H1 (cell line): ENCODE measurements at regions of chr3 and their contacts with region 1.

Region 1: DNA sequence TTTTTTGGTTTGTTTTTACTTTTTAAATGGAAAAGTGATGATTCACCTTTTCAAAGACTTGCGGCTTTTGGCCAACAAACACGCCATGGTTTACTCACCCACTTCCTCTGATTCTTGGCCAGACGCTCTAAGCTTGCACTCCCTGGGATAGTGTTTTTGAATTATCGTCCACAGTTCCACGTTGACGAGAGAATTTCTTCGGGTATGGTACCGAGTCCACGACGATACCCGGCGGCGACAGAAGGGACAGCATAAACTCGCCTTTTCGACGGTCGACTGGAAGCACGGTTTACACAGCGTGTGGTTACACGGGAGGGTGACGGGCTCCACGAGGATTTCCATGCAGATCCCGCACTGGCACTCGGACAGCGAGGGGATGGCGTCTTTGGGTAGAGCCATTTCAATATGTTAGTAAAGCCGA is 783 bp downstream of the RNF168 start:
- DNase-seq: no peak
- H3K4me3 ChIP-seq: peak overlapping the region; percentile 92 to 99 (median 98)
- H3K27ac ChIP-seq: peak overlapping the region; percentile 61; the same call in 1 of the 2 replicates
- H3K4me1 ChIP-seq: peaks cover 0 to 7% (median 3%) of the 10 kb centered on the region in 4 experiments; a peak in 5 of 7 replicates
- H3K27me3 ChIP-seq: no peaks in the 10 kb centered on the region
- CTCF ChIP-seq: no peak
- EP300 ChIP-seq: no peak
- POLR2A ChIP-seq: no peak
- RAD21 ChIP-seq: no peak

Region 2: GRCh38 chr3:196047391-196048030 is 455.3 kb before region 1 on chr3:
- CTCF ChIA-PET with region 1: no interaction called
- POLR2A ChIA-PET with region 1: no interaction called
- DNase-seq: no peak
- H3K4me3 ChIP-seq: no peak overlapping the region
- H3K27ac ChIP-seq: no peak overlapping the region
- H3K4me1 ChIP-seq: no peaks in the 10 kb centered on the region
- H3K27me3 ChIP-seq: no peaks in the 10 kb centered on the region
- CTCF ChIP-seq: no peak
- EP300 ChIP-seq: no peak
- POLR2A ChIP-seq: peak in 1 of 2 experiments; percentile 33; a peak in 1 of 3 replicates
- RAD21 ChIP-seq: no peak

Region 3: GRCh38 chr3:196406811-196407470 is 95.8 kb before region 1 on chr3:
- CTCF ChIA-PET with region 1: no interaction called
- POLR2A ChIA-PET with region 1: no interaction called
- DNase-seq: no peak
- H3K4me3 ChIP-seq: no peak overlapping the region
- H3K27ac ChIP-seq: no peak overlapping the region
- H3K4me1 ChIP-seq: no peaks in the 10 kb centered on the region
- H3K27me3 ChIP-seq: no peaks in the 10 kb centered on the region
- CTCF ChIP-seq: no peak
- EP300 ChIP-seq: no peak
- POLR2A ChIP-seq: no peak
- RAD21 ChIP-seq: no peak

Region 4: DNA sequence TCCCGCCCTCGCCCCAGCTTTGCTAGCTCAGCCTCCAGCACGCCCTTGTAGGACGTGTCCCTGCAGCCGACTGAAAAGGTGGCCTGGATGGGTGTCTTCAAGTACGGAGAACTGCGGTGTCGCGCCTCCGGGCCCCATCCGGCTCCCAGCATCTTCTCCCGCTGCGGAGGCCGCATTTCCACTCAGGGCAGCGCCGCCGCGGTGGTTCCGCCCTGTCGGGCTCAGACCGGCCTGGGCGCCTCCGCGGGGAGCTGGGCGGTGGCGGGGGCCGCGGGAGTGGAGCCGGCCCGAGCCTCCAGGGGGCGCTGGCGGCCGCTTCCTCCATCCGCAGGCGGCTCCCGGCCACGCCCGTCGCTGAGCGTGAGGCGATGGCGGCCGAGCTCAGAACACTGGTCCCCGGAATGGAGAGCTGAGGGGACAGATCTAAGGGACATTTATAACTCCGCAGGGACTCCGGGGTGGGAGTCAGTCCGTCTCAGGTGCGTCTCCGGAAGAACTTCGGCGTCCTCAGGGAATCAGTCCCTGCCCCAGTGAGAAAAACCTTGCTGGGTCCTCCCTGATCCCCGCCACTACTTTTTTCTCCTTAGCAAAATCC is 26.0 kb after region 1 on chr3:
- CTCF ChIA-PET with region 1: interaction called, 40 read pairs
- POLR2A ChIA-PET with region 1: interaction called, 3 read pairs
- DNase-seq: peak; percentile 17 to 98
- H3K4me3 ChIP-seq: peak overlapping the region; percentile 50 to 65 (median 54)
- H3K27ac ChIP-seq: no peak overlapping the region
- H3K4me1 ChIP-seq: peaks cover 0 to 6% (median 3%) of the 10 kb centered on the region in 4 experiments; a peak in 3 of 7 replicates
- H3K27me3 ChIP-seq: no peaks in the 10 kb centered on the region
- CTCF ChIP-seq: peak; percentile 74 to 83 (median 78)
- EP300 ChIP-seq: peak in 1 of 2 experiments; percentile 37; a peak in 1 of 3 replicates
- POLR2A ChIP-seq: peak; percentile 12 to 52
- RAD21 ChIP-seq: peak; percentile 59 to 77